ENCODE measurements at regions of chrX and their contacts with region 1.

Region 1: DNA sequence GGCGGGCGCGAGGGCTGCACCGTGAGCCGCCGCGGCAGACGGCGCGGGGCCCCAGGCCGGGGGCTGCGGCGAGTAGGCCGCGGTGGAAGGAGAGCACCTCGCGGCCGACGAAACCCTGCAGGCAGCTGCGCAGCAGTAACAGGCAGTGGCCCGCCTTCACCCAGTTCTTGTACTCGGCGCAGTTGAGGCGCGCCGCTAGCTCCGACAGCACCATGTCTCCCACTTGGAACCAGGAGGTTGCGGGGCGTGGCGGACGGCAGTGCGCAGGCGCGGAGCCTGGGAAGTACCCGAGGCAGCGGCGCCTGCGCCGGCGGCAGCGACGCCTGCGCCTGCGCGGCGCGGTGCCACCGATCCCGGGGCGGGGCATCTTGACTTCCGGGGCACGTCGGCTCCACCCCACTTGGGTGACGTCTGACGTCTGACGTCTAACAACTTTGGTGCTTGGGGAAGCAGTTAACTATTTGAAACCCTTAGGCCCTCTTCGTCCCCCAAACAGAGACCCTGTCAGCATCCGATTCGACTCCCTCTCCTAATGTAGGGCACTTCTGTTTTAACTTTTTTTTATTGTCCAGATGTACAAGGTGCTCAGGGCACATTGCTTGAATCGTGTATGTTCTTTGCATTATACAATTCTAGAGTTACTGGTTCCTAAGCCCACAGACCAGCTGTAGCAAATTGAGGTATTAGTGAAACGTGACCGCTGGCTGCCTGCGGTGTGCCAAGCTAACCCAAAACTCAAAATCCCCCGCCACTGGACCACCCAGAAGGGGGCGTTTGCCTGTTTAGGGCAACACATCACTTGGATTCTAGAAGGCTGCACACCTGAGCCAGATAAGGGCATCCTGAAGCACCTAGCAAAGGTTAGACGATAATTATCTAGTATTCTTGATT is at the start of gene CXorf38:
- DNase-seq: peak; percentile 85 to 99 (median 92)
- ATAC-seq: peak; percentile 71
- H3K4me3 ChIP-seq: peak within 1 kb of the TSS; percentile 80
- H3K4me3 Mint-ChIP-seq: peak within 1 kb of the TSS; percentile 98
- H3K27ac ChIP-seq: peak within 1 kb of the TSS; percentile 81 to 90
- H3K27ac Mint-ChIP-seq: peak within 1 kb of the TSS; percentile 91
- H3K4me1 ChIP-seq: peaks cover 26% of the 10 kb centered on the region
- H3K4me1 Mint-ChIP-seq: peaks cover 40% of the 10 kb centered on the region
- H3K27me3 ChIP-seq: no peaks in the 10 kb centered on the region
- H3K27me3 Mint-ChIP-seq: no peaks in the 10 kb centered on the region
- CTCF ChIP-seq: no peak
- total RNA-seq, gene CXorf38: 9.4 to 10.4 TPM

Region 2: DNA sequence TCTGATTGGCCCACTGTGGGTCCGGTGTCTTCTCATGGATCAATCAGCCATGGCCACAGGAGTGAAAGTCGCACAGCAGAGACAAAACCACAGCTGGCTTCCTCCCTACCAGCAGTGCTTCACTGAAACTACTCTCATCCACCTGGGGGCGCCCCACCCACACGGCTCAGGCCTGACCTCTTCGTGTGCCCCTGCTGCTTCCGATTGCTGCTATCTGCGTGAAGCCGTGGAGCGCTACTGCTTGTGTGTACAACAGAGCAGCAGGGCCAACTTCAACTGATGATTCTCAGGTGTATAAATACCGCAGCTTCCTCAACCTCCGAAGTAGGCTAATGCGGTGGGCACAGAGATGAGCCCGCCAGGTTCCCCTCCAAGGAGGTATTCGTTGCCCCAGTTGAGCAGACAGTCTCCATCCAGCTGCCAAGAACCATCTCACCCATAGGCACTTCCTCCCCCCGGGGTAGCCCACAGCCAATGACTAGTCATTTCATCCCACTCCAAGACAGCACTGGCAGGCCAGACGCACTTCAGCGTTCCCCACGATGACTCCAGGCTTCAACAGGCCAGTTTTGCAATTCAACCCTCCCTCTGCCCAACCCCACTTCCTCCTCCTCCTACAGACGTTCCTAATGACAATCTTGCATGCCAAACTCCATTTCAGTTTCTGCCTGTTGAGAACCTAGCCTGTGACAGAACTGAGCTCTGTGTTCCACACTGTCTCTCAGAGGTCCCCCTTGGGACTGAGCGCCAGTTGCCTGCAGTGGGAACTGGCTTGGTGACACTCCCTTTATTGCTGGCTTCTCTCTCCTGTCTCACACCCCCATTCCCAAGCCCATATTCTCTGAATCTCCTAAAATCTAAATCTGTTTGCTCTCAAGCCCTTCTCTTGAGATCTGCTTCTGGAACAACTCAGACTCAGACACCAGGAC is 108.1 kb before region 1 on chrX:
- CTCF ChIA-PET with region 1: interaction called, 9 read pairs
- POLR2A ChIA-PET with region 1: interaction called, 8 read pairs
- intact Hi-C with region 1: loop called (anchors 2 to 5 kb)
- DNase-seq: peak; percentile 58 to 82 (median 68)
- ATAC-seq: peak; percentile 95
- H3K4me3 ChIP-seq: no peak overlapping the region
- H3K4me3 Mint-ChIP-seq: peak overlapping the region; percentile 4
- H3K27ac ChIP-seq: no peak overlapping the region
- H3K27ac Mint-ChIP-seq: peak overlapping the region; percentile 69
- H3K4me1 ChIP-seq: peaks cover 15% of the 10 kb centered on the region
- H3K4me1 Mint-ChIP-seq: peaks cover 25% of the 10 kb centered on the region
- H3K27me3 ChIP-seq: no peaks in the 10 kb centered on the region
- H3K27me3 Mint-ChIP-seq: no peaks in the 10 kb centered on the region
- CTCF ChIP-seq: peak; percentile 49

Region 3: DNA sequence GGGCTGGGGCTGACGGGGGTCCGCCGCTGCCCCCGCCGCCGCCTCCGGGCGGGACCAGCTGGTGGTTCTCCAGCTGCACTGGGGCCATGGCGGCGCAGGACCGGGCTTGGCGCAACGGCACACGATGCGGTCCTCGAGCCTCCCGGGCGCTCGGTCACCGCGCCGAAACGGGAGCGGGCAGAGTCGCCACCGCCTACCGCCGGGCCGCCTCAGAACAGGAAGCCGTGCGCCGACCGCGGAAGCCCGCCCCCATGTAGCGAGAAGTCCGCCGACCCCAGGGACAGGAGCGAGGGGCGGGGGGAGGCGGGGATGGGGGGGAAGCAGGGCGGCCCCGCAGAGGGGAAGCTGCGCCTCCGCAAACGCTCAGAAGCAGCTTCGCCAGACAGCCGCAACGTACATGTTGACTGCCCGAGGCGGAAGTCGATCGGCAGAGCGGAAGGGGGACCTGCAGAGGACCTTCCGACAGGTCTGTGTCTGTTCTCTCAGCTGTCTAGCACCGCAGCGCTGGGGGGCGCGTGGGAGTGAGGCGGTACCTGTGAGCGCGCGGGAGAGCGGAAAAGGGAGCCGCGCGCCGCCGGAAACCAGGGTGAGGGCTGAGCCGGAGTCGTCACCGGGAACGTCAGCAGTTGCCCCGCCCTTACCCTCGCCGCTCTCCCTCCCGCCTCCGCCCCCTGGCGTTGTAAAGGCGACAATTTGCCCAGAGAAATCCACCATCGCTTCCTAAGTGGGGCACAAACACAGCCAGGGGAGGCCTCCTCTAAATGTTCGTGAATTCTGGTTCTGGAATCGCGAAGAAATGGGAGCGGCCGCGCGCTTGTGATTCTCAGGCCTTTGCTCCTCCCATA is 88.0 kb after region 1 on chrX and contains the start of gene MED14:
- CTCF ChIA-PET with region 1: interaction called, 18 read pairs
- POLR2A ChIA-PET with region 1: interaction called, 9 read pairs
- intact Hi-C with region 1: loop called (anchors 1 to 5 kb)
- DNase-seq: peak; percentile 80 to 96 (median 90)
- ATAC-seq: peak; percentile 88
- H3K4me3 ChIP-seq: peak within 1 kb of the TSS; percentile 65
- H3K4me3 Mint-ChIP-seq: peak within 1 kb of the TSS; percentile 97
- H3K27ac ChIP-seq: peak within 1 kb of the TSS; percentile 86 to 92
- H3K27ac Mint-ChIP-seq: peak within 1 kb of the TSS; percentile 98
- H3K4me1 ChIP-seq: peaks cover 9% of the 10 kb centered on the region
- H3K4me1 Mint-ChIP-seq: peaks cover 69% of the 10 kb centered on the region
- H3K27me3 ChIP-seq: no peaks in the 10 kb centered on the region
- H3K27me3 Mint-ChIP-seq: no peaks in the 10 kb centered on the region
- CTCF ChIP-seq: peak; percentile 38
- total RNA-seq, gene MED14: 59.9 to 67.7 TPM

Region 4: DNA sequence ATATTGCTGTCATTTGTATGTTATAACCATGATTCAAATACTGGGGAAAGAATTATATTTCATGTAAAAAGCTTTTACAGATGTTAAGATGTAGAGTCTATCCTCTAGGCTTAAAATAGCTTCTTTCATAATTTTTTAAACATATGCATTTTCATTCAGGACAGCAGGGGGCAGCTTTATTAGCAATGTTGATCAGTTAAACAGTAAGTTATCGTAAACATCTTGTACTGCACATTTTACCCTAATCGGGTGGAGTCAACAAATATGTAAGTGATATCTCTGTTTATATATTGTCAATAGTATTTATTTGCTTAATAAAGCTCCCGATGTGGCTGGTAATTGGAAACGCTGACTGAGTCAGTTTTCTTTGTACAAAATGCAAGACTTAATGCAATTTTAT is 230.3 kb after region 1 on chrX:
- CTCF ChIA-PET with region 1: interaction called, 3 read pairs
- POLR2A ChIA-PET with region 1: no interaction called
- intact Hi-C with region 1: loop called in 1 of 2 experiments (anchors 5 kb)
- DNase-seq: peak in 4 of 14 experiments; percentile 27 to 60 (median 52)
- ATAC-seq: no peak
- H3K4me3 ChIP-seq: no peak overlapping the region
- H3K4me3 Mint-ChIP-seq: no peak overlapping the region
- H3K27ac ChIP-seq: no peak overlapping the region
- H3K27ac Mint-ChIP-seq: no peak overlapping the region
- H3K4me1 ChIP-seq: no peaks in the 10 kb centered on the region
- H3K4me1 Mint-ChIP-seq: no peaks in the 10 kb centered on the region
- H3K27me3 ChIP-seq: no peaks in the 10 kb centered on the region
- H3K27me3 Mint-ChIP-seq: no peaks in the 10 kb centered on the region
- CTCF ChIP-seq: peak; percentile 55

Region 5: GRCh38 chrX:41137589-41137988 is 490.0 kb after region 1 on chrX:
- CTCF ChIA-PET with region 1: no interaction called
- POLR2A ChIA-PET with region 1: no interaction called
- intact Hi-C with region 1: loop called in 1 of 2 experiments (anchors 5 kb)
- DNase-seq: peak in 1 of 14 experiments; percentile 10
- ATAC-seq: no peak
- H3K4me3 ChIP-seq: no peak overlapping the region
- H3K4me3 Mint-ChIP-seq: no peak overlapping the region
- H3K27ac ChIP-seq: no peak overlapping the region
- H3K27ac Mint-ChIP-seq: no peak overlapping the region
- H3K4me1 ChIP-seq: no peaks in the 10 kb centered on the region
- H3K4me1 Mint-ChIP-seq: no peaks in the 10 kb centered on the region
- H3K27me3 ChIP-seq: no peaks in the 10 kb centered on the region
- H3K27me3 Mint-ChIP-seq: no peaks in the 10 kb centered on the region
- CTCF ChIP-seq: peak; percentile 35

Measured in CD4-positive, alpha-beta T cell (primary cell).